Psoas muscle (tissue), 8 donors: ENCODE measurements at regions of chr12 and their contacts with region 1.

Region 1: GRCh38 chr12:116106870-116107269 is 170.6 kb downstream of the MED13L start:
- DNase-seq: no peak
- ATAC-seq: no peak
- H3K4me3 ChIP-seq: no peak overlapping the region
- H3K27ac ChIP-seq: no peak overlapping the region
- H3K4me1 ChIP-seq: peaks cover 23% of the 10 kb centered on the region
- H3K27me3 ChIP-seq: no peaks in the 10 kb centered on the region
- CTCF ChIP-seq: no peak

Region 2: GRCh38 chr12:116066381-116067230 is 40.3 kb before region 1 on chr12:
- intact Hi-C with region 1: loop called in 1 of 2 experiments (anchors 5 kb)
- DNase-seq: peak in 1 of 2 donors; percentile 24
- ATAC-seq: no peak
- H3K4me3 ChIP-seq: no peak overlapping the region
- H3K27ac ChIP-seq: no peak overlapping the region
- H3K4me1 ChIP-seq: peaks cover 87% of the 10 kb centered on the region
- H3K27me3 ChIP-seq: no peaks in the 10 kb centered on the region
- CTCF ChIP-seq: peak; percentile 56

Region 3: DNA sequence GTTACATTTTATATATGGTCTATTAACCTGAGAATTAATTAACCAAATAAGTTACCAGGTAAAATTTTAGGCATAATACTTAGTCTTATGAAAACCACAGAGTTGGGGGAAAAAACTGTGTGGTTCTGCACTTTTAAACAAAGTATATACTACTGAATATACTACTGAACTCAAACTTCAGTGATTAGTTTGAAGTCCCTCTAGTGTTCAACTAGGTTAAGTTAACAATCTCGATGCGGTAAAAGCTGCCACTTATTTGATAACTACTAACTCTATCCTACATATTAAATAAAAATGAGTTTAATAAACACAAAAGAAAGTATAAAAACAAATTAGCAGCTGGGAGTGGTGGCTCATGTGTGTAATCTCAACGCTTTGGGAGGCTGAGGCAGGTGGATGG is 113.9 kb after region 1 on chr12:
- intact Hi-C with region 1: no loop called
- DNase-seq: no peak
- ATAC-seq: no peak
- H3K4me3 ChIP-seq: no peak overlapping the region
- H3K27ac ChIP-seq: no peak overlapping the region
- H3K4me1 ChIP-seq: peaks cover 49% of the 10 kb centered on the region
- H3K27me3 ChIP-seq: no peaks in the 10 kb centered on the region
- CTCF ChIP-seq: no peak